GM12878 (cell line): ENCODE measurements at regions of chr10 and their contacts with region 1.

Region 1: DNA sequence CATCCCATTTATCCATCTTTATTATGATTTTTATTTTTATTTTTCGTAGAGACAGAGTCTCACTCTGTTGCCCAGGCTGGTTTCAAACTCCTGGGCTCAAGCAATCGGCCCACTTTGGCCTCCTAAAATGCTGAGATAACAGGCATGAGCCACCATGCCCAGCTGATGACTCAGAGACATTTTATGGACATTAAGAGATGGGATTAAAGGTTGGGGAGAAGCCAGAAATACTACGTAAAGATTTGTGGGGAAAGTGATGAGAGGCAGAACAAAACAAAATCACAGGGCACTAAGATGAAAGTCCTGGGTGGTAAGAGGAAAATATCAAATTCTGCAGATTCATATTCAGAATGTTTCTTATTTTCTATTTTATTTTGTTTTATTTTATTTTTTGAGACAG is 7.6 kb downstream of the WNT8B start:
- DNase-seq: no peak
- ATAC-seq: no peak
- H3K4me3 ChIP-seq: no peak overlapping the region
- H3K27ac ChIP-seq: no peak overlapping the region
- H3K4me1 ChIP-seq: no peaks in the 10 kb centered on the region
- H3K27me3 ChIP-seq: no peaks in the 10 kb centered on the region; a peak in 1 of 4 replicates
- CTCF ChIP-seq: no peak
- EP300 ChIP-seq: no peak
- POLR2A ChIP-seq: no peak
- RAD21 ChIP-seq: no peak

Region 2: DNA sequence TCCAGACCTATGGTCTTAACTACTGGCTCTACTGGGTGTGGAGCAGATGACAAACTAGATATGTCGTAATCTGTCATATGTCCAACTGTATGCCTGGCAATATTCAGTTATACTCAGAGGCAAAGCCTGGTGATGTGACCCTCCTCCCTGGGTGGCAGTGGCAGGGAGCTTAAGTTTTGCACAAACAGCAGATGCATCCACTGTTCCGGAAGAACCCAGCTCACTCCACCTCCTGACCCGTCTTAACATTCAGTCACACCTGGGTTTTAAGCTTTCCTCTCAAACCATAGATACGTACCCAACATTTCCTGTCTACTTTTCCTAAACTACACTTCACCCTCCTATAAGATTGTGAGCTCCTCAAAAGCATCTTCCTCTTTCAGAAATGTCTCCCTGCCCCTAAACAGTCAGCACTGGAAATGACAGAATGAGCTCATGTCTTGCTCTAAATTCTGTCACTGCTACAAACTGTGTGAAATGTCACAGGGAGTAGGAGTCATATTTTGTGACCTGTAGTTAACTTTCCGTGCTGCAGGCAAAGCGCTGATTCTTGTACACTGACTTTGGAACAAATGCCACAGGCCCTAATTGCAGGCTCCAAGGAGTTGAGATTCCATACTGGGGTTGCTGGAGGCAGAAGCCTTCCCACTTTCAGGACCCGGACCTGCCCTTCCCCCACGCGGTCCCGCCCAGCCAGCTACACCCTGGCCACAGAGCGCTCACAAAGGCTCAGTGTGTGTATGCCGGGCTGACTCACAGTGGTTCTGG is 99.5 kb before region 1 on chr10:
- CTCF ChIA-PET with region 1: no interaction called
- POLR2A ChIA-PET with region 1: no interaction called
- RAD21 ChIA-PET with region 1: no interaction called
- SMC1A ChIA-PET with region 1: no interaction called
- in situ Hi-C with region 1: no loop called
- intact Hi-C with region 1: no loop called
- DNase-seq: peak; percentile 34
- ATAC-seq: peak; percentile 15
- H3K4me3 ChIP-seq: no peak overlapping the region
- H3K27ac ChIP-seq: no peak overlapping the region
- H3K4me1 ChIP-seq: peaks cover 21% of the 10 kb centered on the region
- H3K27me3 ChIP-seq: no peaks in the 10 kb centered on the region
- CTCF ChIP-seq: no peak
- EP300 ChIP-seq: no peak
- POLR2A ChIP-seq: no peak
- RAD21 ChIP-seq: no peak

Region 3: DNA sequence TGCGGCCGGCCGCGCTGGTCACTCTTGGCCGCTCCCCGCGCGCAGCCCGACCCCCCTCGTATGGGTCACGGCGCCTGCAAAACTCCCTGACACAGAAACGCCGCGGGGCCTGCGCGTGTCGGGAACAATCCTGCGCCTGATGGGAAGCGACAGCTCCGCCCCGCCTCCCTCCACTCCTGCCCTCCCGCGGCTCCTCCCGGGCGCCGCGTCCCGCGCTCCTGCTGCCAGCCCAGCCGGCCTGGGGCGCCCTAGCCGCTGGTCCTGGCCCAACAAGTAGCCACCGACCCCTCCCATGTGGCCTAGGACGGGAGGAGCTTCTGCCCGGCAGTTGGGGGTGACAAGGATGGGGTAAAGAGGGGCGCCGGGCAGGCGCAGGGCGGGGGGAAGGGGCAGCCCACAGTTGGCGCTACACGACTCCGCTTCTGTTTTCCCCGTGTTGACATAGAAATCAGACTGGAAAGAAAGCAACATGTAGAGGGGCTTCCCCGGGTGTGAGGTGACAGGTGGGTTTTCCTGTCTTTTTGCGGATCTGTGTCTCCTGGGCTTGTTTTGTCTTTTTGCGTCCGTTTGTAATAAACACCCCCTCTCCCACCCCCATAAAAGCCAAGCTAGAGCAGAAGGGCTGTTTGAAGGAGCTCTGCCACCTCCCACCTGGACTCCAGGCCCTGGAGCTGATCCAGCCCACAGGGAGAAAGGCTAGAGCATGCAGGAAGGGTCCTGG is 239.9 kb after region 1 on chr10:
- CTCF ChIA-PET with region 1: no interaction called
- POLR2A ChIA-PET with region 1: no interaction called
- RAD21 ChIA-PET with region 1: no interaction called
- SMC1A ChIA-PET with region 1: no interaction called
- in situ Hi-C with region 1: no loop called
- intact Hi-C with region 1: no loop called
- DNase-seq: no peak
- ATAC-seq: no peak
- H3K4me3 ChIP-seq: no peak overlapping the region
- H3K27ac ChIP-seq: no peak overlapping the region
- H3K4me1 ChIP-seq: no peaks in the 10 kb centered on the region
- H3K27me3 ChIP-seq: peaks cover 17 to 25% of the 10 kb centered on the region in 2 experiments
- CTCF ChIP-seq: no peak
- EP300 ChIP-seq: no peak
- POLR2A ChIP-seq: no peak
- RAD21 ChIP-seq: no peak

Region 4: DNA sequence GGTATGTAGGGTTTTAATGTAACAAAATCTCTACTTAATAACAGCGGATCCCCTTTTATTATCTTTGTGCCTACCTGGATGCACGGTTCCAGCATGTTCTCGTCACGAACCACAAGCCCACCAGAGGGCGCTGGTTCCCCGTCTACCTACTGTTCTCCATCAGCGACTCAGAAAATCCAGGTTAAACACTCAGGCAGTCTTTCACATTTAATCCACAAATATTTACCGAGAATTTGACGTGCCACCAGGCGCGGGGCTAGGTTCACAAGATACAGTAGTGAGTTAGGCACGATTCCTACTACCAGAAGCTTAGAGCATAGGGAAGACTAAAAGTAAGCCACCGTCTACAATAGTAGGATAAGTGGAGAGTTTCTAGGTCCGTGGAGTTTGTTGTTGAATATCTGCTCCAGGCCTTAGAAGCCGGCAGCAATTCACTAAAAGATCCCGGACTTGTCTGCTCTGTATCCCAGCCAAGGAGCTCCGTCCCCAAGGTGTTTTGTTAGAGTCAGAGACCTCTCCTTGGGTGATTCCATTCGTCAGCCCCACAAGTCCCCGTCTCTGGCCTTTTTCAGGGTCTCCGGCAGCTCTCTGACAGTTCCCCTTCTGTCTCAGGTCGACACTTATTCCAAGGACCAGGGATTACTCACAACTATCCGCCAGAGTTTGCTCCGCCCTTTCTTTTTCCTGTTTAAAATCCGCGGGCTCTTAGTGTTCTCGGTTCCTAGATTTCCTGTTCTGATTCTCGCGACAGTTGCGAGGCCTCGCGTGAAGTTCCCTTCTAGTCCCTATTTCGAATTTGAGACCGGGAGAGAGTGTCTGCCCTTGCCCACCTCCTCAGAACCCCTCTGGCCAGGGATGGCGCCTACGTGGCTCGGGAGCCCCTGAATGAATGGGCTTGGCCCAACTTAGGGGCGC is 589.9 kb after region 1 on chr10:
- CTCF ChIA-PET with region 1: no interaction called
- POLR2A ChIA-PET with region 1: interaction called, 14 read pairs
- RAD21 ChIA-PET with region 1: no interaction called
- SMC1A ChIA-PET with region 1: no interaction called
- in situ Hi-C with region 1: no loop called
- intact Hi-C with region 1: no loop called
- DNase-seq: peak; percentile 81
- ATAC-seq: peak; percentile 54
- H3K4me3 ChIP-seq: peak overlapping the region; percentile 95
- H3K27ac ChIP-seq: peak overlapping the region; percentile 98
- H3K4me1 ChIP-seq: peaks cover 31% of the 10 kb centered on the region
- H3K27me3 ChIP-seq: peaks cover 0 to 3% of the 10 kb centered on the region in 2 experiments; a peak in 1 of 4 replicates
- CTCF ChIP-seq: peak; percentile 87 to 92 (median 92)
- EP300 ChIP-seq: no peak
- POLR2A ChIP-seq: no peak; the same call in 1 of the 2 replicates
- RAD21 ChIP-seq: peak; percentile 83